ENCODE measurements at regions of chr5 and their contacts with region 1.

Region 1: GRCh38 chr5:180126726-180127681 is 55.4 kb upstream of the RNF130 start:
- DNase-seq: peak; percentile 81

Region 2: GRCh38 chr5:180172450-180173197 is 45.6 kb after region 1 on chr5:
- intact Hi-C with region 1: no loop called
- DNase-seq: no peak

Region 3: DNA sequence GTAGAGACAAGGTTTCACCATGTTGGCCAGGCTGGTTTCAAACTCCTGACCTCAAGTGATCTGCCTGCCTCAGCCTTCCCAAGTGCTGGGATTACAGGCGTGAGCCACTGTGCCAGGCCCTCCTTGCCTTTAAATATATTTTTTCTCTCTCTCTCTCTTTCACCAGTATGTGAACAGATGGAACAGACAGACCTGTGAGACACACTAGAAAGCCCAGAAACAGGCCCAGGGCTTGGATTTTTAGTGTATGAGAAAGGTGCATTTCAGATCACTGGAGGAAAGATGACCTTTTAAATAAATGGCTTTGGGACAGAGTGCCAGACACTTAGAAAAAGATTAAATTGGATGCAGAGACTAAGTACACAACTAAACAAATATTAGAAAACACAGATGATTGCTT is 78.9 kb after region 1 on chr5:
- intact Hi-C with region 1: loop called in 1 of 2 experiments (anchors 2 kb)
- DNase-seq: no peak

Region 4: GRCh38 chr5:180284149-180284548 is 157.1 kb after region 1 on chr5:
- intact Hi-C with region 1: loop called in 1 of 2 experiments (anchors 1 kb)
- DNase-seq: no peak

Measured in posterior vena cava (tissue), 2 donors.